Ascending aorta (tissue), 2 donors: ENCODE measurements at regions of chr9 and their contacts with region 1.

Region 1: DNA sequence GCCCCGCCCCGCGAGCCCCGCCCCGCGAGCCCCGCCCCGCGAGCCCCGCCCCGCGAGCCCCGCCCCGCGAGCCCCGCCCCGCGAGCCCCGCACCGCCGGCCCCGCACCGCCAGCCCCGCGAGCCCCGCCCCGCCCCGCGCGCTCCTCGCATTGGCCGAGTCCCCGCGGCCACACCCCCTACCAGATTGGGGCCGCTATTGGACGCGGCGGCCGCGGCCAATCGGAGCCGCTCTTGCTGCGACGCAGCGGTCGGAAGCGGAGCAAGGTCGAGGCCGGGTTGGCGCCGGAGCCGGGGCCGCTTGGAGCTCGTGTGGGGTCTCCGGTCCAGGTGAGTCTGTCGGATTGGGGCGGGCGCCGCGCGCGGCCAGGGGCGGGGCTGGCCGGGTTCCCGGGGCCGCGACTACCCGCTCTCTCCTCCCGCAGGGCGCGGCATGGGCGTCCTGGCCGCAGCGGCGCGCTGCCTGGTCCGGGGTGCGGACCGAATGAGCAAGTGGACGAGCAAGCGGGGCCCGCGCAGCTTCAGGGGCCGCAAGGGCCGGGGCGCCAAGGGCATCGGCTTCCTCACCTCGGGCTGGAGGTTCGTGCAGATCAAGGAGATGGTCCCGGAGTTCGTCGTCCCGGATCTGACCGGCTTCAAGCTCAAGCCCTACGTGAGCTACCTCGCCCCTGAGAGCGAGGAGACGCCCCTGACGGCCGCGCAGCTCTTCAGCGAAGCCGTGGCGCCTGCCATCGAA is at the start of gene MRPL41:
- DNase-seq: peak; percentile 56 to 94
- H3K4me3 ChIP-seq: peak within 1 kb of the TSS; percentile 79 to 91
- H3K27ac ChIP-seq: peak within 1 kb of the TSS; percentile 88 to 96
- H3K4me1 ChIP-seq: peaks cover 3 to 18% of the 10 kb centered on the region in 2 donors
- H3K27me3 ChIP-seq: no peaks in the 10 kb centered on the region
- CTCF ChIP-seq: no peak
- total RNA-seq, gene MRPL41: 121 TPM

Region 2: GRCh38 chr9:137590462-137591383 is 38.9 kb after region 1 on chr9 and contains the start of gene ZMYND19:
- intact Hi-C with region 1: loop called (anchors 5 kb)
- DNase-seq: peak; percentile 46 to 93
- H3K4me3 ChIP-seq: peak within 1 kb of the TSS; percentile 76 to 97
- H3K27ac ChIP-seq: peak within 1 kb of the TSS; percentile 43 to 60
- H3K4me1 ChIP-seq: peaks cover 7 to 14% of the 10 kb centered on the region in 2 donors
- H3K27me3 ChIP-seq: no peaks in the 10 kb centered on the region
- CTCF ChIP-seq: no peak
- total RNA-seq, gene ZMYND19: 4.3 TPM